ENCODE measurements at regions of chr22 and their contacts with region 1.

Region 1: DNA sequence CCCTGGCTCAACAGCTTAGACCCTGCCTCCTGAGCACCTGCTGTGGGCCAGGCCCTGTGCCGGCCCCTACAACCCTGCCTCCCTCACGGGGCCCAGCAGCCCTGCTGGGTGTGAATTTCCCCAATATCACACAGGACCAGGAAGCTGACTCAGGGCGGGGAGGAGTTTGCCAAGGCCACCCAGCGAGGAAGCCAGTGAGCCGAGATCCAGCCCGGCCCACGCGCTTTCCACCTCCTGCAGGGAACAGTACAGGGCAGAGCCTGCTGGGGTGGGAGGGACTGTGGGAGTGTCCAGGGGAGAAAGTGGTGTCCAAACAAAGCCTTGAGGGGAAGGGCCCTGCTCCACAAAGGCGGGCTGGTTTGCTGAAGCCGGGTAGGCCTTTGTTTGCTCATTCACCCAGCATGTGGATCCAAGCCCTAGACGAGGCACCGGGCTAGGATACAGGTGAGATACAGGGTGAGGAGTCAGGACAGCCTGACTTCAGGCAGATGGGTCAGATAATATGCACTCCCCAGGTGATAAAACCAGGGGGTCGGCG is 26.8 kb downstream of the RPL3 start:
- DNase-seq: peak; percentile 95
- H3K4me3 Mint-ChIP-seq: peak overlapping the region; percentile 52
- H3K27ac Mint-ChIP-seq: peak overlapping the region; percentile 94
- H3K4me1 Mint-ChIP-seq: peaks cover 82% of the 10 kb centered on the region
- H3K27me3 Mint-ChIP-seq: no peaks in the 10 kb centered on the region
- CTCF ChIP-seq: no peak

Region 2: DNA sequence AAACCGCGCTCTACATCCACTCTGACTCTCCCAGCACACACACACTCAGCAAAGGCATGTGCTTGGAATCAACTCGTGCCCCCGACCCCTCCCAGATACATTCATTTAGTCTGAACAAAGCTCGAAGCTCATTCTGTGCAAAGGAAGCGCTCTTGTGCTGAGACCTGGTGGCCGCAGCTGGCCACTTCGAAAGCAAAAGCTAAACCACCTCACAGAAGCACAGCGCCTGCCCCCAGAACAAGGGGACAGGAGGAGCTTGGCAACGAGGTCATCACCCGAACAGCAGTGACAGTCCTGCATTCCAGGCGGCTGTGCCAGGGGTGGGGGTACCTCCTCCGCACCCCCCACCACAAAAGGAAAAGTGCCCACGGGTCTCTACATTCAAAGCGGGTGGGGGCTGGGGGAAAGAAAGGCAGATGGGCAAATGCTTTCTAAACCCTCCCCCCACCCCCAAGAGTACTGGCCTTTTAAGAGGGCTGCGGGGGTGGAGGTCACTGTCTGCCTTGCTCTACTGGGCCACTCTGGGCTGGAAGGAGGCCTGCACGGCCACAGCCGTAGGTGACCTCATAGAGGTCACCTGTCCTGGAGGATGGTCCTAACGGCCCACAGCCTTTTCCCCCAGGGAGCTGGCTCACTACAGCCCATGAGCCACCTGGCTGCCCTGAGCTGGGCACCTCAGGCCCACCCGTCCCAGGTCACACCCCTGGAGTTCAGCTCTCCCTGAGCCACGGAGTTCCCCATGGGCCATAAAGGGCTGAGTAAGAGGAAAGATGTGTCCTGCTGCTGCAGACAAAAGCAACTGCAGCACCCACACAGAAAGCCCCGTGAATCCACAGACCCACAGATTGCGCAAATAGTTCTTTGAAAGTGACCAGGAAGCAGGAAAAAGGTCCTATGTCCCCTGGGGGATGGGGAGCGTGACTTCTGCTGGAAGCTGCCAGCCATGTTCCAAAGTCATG is 161.5 kb before region 1 on chr22:
- CTCF ChIA-PET with region 1: no interaction called
- intact Hi-C with region 1: no loop called
- DNase-seq: no peak
- H3K4me3 Mint-ChIP-seq: no peak overlapping the region
- H3K27ac Mint-ChIP-seq: no peak overlapping the region
- H3K4me1 Mint-ChIP-seq: no peaks in the 10 kb centered on the region
- H3K27me3 Mint-ChIP-seq: no peaks in the 10 kb centered on the region
- CTCF ChIP-seq: no peak

Region 3: GRCh38 chr22:39215426-39216120 is 77.1 kb before region 1 on chr22:
- CTCF ChIA-PET with region 1: interaction called, 10 read pairs
- intact Hi-C with region 1: no loop called
- DNase-seq: no peak
- H3K4me3 Mint-ChIP-seq: no peak overlapping the region
- H3K27ac Mint-ChIP-seq: peak overlapping the region; percentile 83
- H3K4me1 Mint-ChIP-seq: peaks cover 36% of the 10 kb centered on the region
- H3K27me3 Mint-ChIP-seq: no peaks in the 10 kb centered on the region
- CTCF ChIP-seq: peak; percentile 42

Region 4: GRCh38 chr22:39240828-39241793 is 51.5 kb before region 1 on chr22:
- CTCF ChIA-PET with region 1: interaction called, 4 read pairs
- intact Hi-C with region 1: loop called (anchors 5 kb)
- DNase-seq: peak; percentile 60
- H3K4me3 Mint-ChIP-seq: peak overlapping the region; percentile 96
- H3K27ac Mint-ChIP-seq: peak overlapping the region; percentile 89
- H3K4me1 Mint-ChIP-seq: peaks cover 66% of the 10 kb centered on the region
- H3K27me3 Mint-ChIP-seq: no peaks in the 10 kb centered on the region
- CTCF ChIP-seq: no peak

Region 5: DNA sequence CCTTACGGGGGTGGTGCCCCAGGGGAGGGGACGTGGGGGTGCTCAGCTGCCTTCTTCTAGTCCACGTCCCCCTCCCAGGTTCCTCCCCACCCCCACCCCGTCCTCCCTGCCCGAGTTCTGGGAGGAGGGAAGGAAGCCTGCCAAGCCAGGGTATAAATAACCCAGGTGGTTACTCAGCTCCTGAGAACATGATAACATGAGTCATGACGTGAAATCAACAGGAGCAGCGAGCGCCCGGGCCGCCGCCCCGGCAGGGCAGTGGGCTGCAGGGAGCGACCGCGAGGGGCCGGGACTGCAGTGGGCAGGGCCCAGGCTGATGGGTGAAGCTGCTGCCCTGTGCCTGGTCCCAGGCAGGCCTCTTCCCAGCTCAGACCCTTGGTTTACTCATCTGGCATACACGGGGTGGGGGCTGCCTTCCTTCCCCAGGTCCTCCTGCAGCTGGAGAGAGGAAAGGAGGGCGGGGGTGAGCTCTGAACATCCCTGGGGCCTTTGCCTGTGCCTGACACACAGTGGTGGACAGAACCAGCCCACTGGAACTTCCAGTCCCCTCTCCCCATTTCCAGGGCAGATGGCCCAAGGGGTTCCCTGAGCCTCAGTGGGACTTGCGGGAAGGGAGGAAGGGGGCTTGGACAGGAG is 39.1 kb before region 1 on chr22:
- CTCF ChIA-PET with region 1: interaction called, 17 read pairs
- intact Hi-C with region 1: no loop called
- DNase-seq: peak; percentile 78
- H3K4me3 Mint-ChIP-seq: peak overlapping the region; percentile 41
- H3K27ac Mint-ChIP-seq: no peak overlapping the region
- H3K4me1 Mint-ChIP-seq: peaks cover 41% of the 10 kb centered on the region
- H3K27me3 Mint-ChIP-seq: no peaks in the 10 kb centered on the region
- CTCF ChIP-seq: no peak

Measured in Calu3 (cell line).